Gastrocnemius medialis (tissue), 4 donors: ENCODE measurements at regions of chr12 and their contacts with region 1.

Region 1: GRCh38 chr12:45990468-45991283 is at the start of gene SCAF11:
- DNase-seq: peak; percentile 100
- ATAC-seq: peak; percentile 79 to 87
- H3K4me3 ChIP-seq: peak within 1 kb of the TSS; percentile 90 to 99 (median 90)
- H3K27ac ChIP-seq: peak within 1 kb of the TSS; percentile 99 to 100 (median 100)
- H3K4me1 ChIP-seq: peaks cover 39 to 41% of the 10 kb centered on the region in 2 donors
- H3K27me3 ChIP-seq: no peaks in the 10 kb centered on the region
- CTCF ChIP-seq: peak; percentile 97 to 100 (median 99)
- POLR2A ChIP-seq: peak; percentile 92 to 93
- total RNA-seq, gene SCAF11: 69.9 to 101 (median 97.7) TPM

Region 2: GRCh38 chr12:44875954-44876553 is 1114.6 kb before region 1 on chr12 and contains the start of gene NELL2:
- in situ Hi-C with region 1: no loop called
- intact Hi-C with region 1: no loop called
- DNase-seq: no peak
- ATAC-seq: peak in 1 of 2 donors; percentile 39
- H3K4me3 ChIP-seq: peak within 1 kb of the TSS; percentile 52 to 75 (median 62)
- H3K27ac ChIP-seq: no peak within 1 kb of the TSS
- H3K4me1 ChIP-seq: peaks cover 8 to 22% of the 10 kb centered on the region in 2 donors
- H3K27me3 ChIP-seq: peaks cover 30 to 60% (median 49%) of the 10 kb centered on the region in 3 donors
- CTCF ChIP-seq: no peak
- POLR2A ChIP-seq: no peak
- total RNA-seq, gene NELL2: 0.58 to 0.82 TPM in 2 of 4 donors, not detected in the others

Region 3: DNA sequence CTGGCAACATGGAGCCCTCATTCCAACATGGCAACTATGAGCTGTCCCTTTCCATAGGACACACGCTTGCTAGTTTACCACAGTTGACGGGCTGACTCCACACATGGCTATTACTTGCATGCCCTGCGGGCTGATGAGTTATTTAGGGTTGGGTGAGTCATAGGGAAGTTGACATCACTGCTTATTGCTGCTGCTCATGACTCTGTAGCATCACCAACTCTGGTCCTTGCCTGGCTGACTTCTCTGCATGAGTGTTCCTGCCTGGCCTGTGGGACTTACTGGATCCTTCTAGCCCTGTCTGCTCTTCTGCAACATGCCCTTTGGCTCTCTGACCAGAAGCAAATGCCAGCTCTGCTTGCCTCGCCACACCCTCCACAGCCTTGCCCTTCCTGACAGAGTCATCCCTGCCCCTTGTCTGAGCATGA is 575.3 kb before region 1 on chr12:
- in situ Hi-C with region 1: no loop called
- intact Hi-C with region 1: loop called (anchors 5 kb)
- DNase-seq: peak; percentile 84 to 94
- ATAC-seq: peak; percentile 99 to 100
- H3K4me3 ChIP-seq: no peak overlapping the region
- H3K27ac ChIP-seq: peak overlapping the region; percentile 74 to 90 (median 82)
- H3K4me1 ChIP-seq: peaks cover 0 to 7% of the 10 kb centered on the region in 2 donors
- H3K27me3 ChIP-seq: no peaks in the 10 kb centered on the region
- CTCF ChIP-seq: no peak
- POLR2A ChIP-seq: no peak

Region 4: DNA sequence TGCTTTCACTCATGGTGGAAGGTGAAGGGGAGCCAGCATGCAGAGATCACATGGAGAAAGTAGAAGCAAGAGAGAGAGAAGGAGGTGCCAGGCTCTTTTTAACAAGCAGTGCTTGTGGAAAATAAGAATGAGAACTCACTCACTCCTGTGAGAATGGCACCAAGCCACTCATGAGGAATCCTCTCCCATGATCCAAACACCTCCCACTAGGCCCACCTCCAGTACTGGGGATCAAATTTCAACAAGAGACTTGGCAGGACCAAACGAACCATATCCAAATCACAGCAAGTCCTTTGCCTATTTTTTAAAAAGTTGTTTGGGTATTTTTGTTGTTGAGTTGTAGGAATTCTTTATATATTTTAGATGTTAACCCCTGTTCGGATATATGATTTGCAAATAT is 507.1 kb before region 1 on chr12:
- in situ Hi-C with region 1: no loop called
- intact Hi-C with region 1: no loop called
- DNase-seq: peak; percentile 39 to 65
- ATAC-seq: peak; percentile 47 to 72
- H3K4me3 ChIP-seq: no peak overlapping the region
- H3K27ac ChIP-seq: no peak overlapping the region
- H3K4me1 ChIP-seq: peaks cover 0 to 7% of the 10 kb centered on the region in 2 donors
- H3K27me3 ChIP-seq: no peaks in the 10 kb centered on the region
- CTCF ChIP-seq: no peak
- POLR2A ChIP-seq: no peak

Region 5: GRCh38 chr12:46071769-46072624 is 81.3 kb after region 1 on chr12:
- in situ Hi-C with region 1: no loop called
- intact Hi-C with region 1: loop called (anchors 2 kb)
- DNase-seq: no peak
- ATAC-seq: peak; percentile 39 to 61
- H3K4me3 ChIP-seq: no peak overlapping the region
- H3K27ac ChIP-seq: no peak overlapping the region
- H3K4me1 ChIP-seq: no peaks in the 10 kb centered on the region
- H3K27me3 ChIP-seq: no peaks in the 10 kb centered on the region
- CTCF ChIP-seq: peak; percentile 62 to 79 (median 72)
- POLR2A ChIP-seq: no peak

Region 6: GRCh38 chr12:46268590-46269558 is 278.2 kb after region 1 on chr12 and contains the start of gene SLC38A1:
- in situ Hi-C with region 1: no loop called
- intact Hi-C with region 1: loop called (anchors 1 kb)
- DNase-seq: peak; percentile 92 to 94
- ATAC-seq: peak; percentile 74
- H3K4me3 ChIP-seq: peak within 1 kb of the TSS; percentile 62 to 78 (median 70)
- H3K27ac ChIP-seq: peak within 1 kb of the TSS; percentile 91 to 98 (median 93)
- H3K4me1 ChIP-seq: peaks cover 7 to 18% of the 10 kb centered on the region in 2 donors
- H3K27me3 ChIP-seq: no peaks in the 10 kb centered on the region
- CTCF ChIP-seq: peak in 1 of 5 experiments; percentile 10
- POLR2A ChIP-seq: peak; percentile 84 to 96
- total RNA-seq, gene SLC38A1: 237 to 472 (median 339) TPM

Region 7: DNA sequence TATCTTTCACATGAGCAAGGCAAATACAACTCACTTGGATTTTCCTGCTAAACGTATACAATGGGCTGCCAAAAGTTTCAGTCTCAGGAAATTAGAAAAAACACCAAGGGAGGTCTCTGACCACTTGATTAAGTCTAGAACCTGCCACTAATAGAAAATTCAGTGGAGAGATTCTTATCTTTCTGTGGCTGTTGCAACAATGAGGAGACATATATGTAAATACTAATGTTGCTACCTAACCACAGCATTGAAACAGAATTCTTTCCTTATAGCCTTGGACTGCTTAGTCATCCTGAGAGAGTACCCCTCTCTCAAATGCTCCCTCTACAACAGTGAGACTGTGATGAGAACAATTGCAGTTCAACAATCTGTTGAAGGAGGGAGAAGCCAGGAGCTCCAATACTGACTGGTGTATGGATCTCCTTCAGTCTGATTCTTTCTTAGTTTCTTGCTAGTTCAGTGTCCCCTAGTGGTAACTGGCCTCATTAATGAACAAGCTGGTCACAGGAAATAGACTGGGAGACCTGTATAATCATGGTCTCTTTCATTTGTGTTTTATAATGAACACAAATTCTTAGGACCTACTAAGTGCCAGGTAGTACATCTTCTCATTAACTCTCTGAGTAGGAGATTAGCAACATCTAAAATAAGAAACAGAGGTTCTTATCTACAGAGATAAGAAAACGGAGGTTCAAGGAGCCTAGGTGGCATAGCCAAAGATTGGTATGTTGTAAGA is 670.6 kb after region 1 on chr12:
- in situ Hi-C with region 1: loop called in 2 of 4 experiments (anchors 25 kb)
- intact Hi-C with region 1: loop called (anchors 5 kb)
- DNase-seq: no peak
- ATAC-seq: peak; percentile 67 to 68
- H3K4me3 ChIP-seq: peak overlapping the region in 1 of 4 donors; percentile 42
- H3K27ac ChIP-seq: peak overlapping the region; percentile 67 to 80 (median 74)
- H3K4me1 ChIP-seq: peaks cover 57 to 78% of the 10 kb centered on the region in 2 donors
- H3K27me3 ChIP-seq: no peaks in the 10 kb centered on the region
- CTCF ChIP-seq: peak; percentile 58 to 89 (median 72)
- POLR2A ChIP-seq: peak in 1 of 2 donors; percentile 9